HEK293 (cell line): ENCODE measurements at regions of chr6 and their contacts with region 1.

Region 1: DNA sequence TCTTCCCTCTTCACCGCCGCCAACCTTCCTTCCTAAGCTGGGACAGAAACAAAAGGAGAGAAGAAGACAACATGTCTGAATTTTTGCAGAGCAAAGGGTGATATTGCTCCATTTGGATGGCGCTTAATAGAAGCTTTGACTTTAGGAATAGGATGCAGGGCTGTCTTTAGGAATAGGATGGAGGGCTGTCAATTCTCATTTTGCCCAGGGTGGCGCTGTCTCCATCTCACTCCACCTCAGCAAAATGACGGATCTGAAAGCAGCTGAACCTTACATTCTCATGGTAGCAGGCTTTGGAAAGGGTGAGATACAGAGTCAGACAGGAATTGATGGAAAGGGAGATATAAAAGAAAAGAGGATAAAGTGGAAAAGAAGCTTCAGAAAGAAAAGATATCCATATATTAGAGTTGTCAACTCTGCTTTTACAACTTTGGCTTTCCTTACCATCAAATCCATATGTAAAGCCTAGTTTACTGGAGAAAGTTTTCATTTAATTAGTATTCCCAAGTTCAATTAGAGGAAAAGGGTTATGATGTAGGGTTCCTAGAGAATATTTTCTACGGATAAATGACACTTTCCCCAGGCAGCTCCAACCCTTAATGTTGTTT is 2.4 kb downstream of the MTCL3 start:
- H3K4me3 ChIP-seq: peak overlapping the region; percentile 78
- H3K27ac ChIP-seq: no peak overlapping the region; the same call in 1 of the 2 replicates
- H3K4me1 ChIP-seq: peaks cover 3% of the 10 kb centered on the region; the same call in 1 of the 2 replicates
- CTCF ChIP-seq: no peak; the same call in 1 of the 2 replicates

Region 2: DNA sequence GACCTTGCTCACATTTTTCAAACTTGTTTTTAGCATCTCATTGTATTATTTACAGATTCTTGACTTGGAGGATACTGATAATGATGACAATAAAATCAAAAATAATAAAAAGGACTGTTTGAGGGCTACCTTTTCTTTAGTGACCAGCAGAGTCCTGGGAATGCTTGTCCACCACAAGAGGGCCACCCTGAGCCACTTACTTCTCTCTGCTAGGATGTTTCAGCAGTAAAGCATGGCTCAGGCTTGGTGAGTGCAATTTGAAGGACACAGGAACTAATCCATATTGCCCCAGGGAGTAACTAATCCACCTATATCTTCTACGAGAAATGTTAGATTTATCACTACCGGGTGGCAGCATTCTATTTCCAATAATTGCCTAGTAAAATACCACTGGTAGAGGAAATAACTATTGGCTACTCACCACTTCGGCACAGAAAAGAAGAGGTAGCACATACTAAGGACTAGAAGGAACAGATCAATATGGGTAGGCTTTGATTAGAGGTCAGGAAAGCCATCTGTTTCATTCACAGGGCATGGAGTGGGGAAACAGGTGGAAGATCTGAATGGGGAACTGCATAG is 51.8 kb before region 1 on chr6:
- CTCF ChIA-PET with region 1: interaction called, 26 read pairs
- POLR2A ChIA-PET with region 1: no interaction called
- H3K4me3 ChIP-seq: no peak overlapping the region
- H3K27ac ChIP-seq: no peak overlapping the region
- H3K4me1 ChIP-seq: peaks cover 3% of the 10 kb centered on the region; the same call in 1 of the 2 replicates
- CTCF ChIP-seq: peak; percentile 59; the same call in 1 of the 2 replicates

Region 3: DNA sequence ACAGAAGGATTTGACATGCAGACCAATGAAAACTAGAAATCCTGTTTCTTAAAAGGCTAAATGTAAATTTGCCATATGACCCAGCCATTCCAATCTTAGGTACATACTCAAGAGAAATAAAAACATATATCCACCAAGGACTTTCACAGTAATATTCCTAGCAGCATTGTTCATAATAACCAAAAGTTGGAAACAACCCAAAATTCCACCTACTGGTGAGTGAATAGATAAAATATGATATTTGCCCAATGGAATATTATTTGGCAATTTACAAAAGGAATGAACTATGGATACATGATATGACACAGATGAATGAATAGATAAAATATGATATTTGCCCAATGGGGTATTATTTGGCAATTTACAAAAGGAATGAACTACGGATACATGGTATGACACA is 20.3 kb before region 1 on chr6:
- CTCF ChIA-PET with region 1: interaction called, 23 read pairs
- POLR2A ChIA-PET with region 1: interaction called, 4 read pairs
- H3K4me3 ChIP-seq: no peak overlapping the region
- H3K27ac ChIP-seq: no peak overlapping the region
- H3K4me1 ChIP-seq: no peaks in the 10 kb centered on the region
- CTCF ChIP-seq: no peak

Region 4: GRCh38 chr6:127539272-127539671 is 22.5 kb after region 1 on chr6:
- CTCF ChIA-PET with region 1: interaction called, 25 read pairs
- POLR2A ChIA-PET with region 1: no interaction called
- H3K4me3 ChIP-seq: no peak overlapping the region
- H3K27ac ChIP-seq: no peak overlapping the region
- H3K4me1 ChIP-seq: no peaks in the 10 kb centered on the region
- CTCF ChIP-seq: no peak

Region 5: GRCh38 chr6:127592964-127593363 is 76.2 kb after region 1 on chr6:
- CTCF ChIA-PET with region 1: no interaction called
- POLR2A ChIA-PET with region 1: no interaction called
- H3K4me3 ChIP-seq: no peak overlapping the region
- H3K27ac ChIP-seq: no peak overlapping the region
- H3K4me1 ChIP-seq: no peaks in the 10 kb centered on the region
- CTCF ChIP-seq: no peak

Region 6: DNA sequence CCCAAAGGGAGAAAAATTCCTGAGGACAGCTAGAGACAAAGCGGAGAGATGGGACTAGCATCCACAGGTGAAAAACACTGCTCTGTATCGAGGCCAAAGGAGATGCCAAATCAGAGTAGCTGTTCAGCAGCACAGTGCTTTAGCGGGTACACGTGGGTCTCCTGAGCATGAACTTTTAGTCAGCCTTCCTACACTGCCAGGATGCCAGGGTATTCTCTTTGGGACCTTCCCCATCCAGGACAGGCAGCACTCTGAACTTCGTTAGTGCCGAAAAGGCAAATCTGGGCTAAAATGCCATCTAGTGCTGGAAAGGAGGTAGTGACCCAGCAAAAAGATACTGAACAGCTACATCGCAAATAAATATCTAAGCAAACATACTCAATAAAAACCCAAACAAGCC is 125.1 kb after region 1 on chr6:
- CTCF ChIA-PET with region 1: interaction called, 11 read pairs
- POLR2A ChIA-PET with region 1: no interaction called
- H3K4me3 ChIP-seq: no peak overlapping the region
- H3K27ac ChIP-seq: no peak overlapping the region
- H3K4me1 ChIP-seq: no peaks in the 10 kb centered on the region
- CTCF ChIP-seq: 0 out of 2 replicates have a peak, but pooled peaks have one; percentile 33

Region 7: GRCh38 chr6:127824061-127824460 is 307.3 kb after region 1 on chr6:
- CTCF ChIA-PET with region 1: no interaction called
- POLR2A ChIA-PET with region 1: no interaction called
- H3K4me3 ChIP-seq: no peak overlapping the region
- H3K27ac ChIP-seq: no peak overlapping the region
- H3K4me1 ChIP-seq: no peaks in the 10 kb centered on the region
- CTCF ChIP-seq: no peak

Region 8: DNA sequence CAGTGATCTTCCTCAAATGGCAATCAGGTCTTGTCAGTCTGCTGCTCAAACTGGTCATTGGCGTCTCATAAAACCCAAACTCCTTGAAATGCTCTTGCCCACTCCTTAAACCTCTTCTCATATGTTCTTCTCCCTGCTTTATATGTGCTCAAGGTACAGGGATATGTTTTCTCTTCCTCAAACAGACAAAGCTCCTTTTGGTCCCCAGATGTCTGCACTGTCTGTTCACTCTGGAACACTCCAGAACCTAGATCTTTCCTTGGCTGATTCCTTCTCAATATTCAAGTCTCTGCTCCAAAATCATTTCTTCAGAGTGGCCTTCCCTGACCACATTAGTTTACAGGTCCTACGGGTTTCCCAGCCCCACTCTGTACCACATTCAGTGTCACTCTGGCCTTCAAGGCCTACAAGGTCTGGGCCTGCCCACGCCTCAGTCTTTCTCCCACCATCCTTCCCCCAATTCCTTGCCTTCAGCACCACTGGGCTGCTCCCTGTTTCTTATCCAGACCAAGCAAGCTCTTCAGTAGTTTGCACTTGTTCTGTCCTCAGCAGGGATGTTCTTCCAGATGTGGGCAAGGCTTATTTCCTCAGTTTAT is 375.1 kb after region 1 on chr6:
- CTCF ChIA-PET with region 1: no interaction called
- POLR2A ChIA-PET with region 1: no interaction called
- H3K4me3 ChIP-seq: no peak overlapping the region
- H3K27ac ChIP-seq: no peak overlapping the region
- H3K4me1 ChIP-seq: no peaks in the 10 kb centered on the region
- CTCF ChIP-seq: no peak